Panc1 (cell line): ENCODE measurements at regions of chr3 and their contacts with region 1.

Region 1: GRCh38 chr3:160044121-160044520 is 55.5 kb downstream of the IL12A start:
- DNase-seq: no peak
- ATAC-seq: no peak
- H3K4me3 ChIP-seq: no peak overlapping the region
- H3K27ac ChIP-seq: no peak overlapping the region
- H3K4me1 ChIP-seq: no peaks in the 10 kb centered on the region
- H3K27me3 ChIP-seq: peaks cover 7% of the 10 kb centered on the region
- CTCF ChIP-seq: no peak

Region 2: DNA sequence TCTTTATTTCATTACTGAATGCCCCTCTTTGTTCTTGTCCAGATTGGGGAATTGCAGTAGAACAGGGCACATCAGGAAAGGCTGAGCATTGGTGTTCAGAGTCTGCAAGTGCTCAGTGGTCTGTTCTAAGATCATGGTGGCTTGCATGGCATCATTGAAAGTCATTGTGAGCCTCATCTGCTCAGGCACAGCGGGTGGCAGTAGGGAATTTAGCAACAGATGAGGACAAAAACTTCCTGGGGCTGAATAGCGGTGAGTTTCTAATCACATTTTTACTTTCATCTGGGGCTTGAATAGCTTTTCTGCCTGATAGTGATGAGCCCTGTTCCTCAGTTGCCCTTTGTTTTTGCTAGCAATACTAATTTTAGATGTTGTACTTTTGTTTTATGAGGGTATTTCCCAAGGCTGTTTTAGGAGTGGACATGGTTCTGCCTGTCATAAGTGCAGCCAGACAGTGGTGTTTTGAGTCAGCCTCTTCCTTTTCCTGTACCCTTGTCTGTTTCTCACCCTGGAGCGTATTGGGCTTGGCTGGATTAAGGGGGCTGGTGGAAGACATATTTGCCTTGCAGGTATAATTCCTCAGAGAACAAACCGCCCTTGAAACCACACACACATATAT is 182.6 kb before region 1 on chr3:
- CTCF ChIA-PET with region 1: no interaction called
- POLR2A ChIA-PET with region 1: no interaction called
- in situ Hi-C with region 1: no loop called
- intact Hi-C with region 1: no loop called
- DNase-seq: no peak
- ATAC-seq: no peak
- H3K4me3 ChIP-seq: no peak overlapping the region
- H3K27ac ChIP-seq: no peak overlapping the region
- H3K4me1 ChIP-seq: peaks cover 10% of the 10 kb centered on the region
- H3K27me3 ChIP-seq: no peaks in the 10 kb centered on the region
- CTCF ChIP-seq: no peak

Region 3: GRCh38 chr3:160090653-160091052 is 46.5 kb after region 1 on chr3:
- CTCF ChIA-PET with region 1: interaction called, 18 read pairs
- POLR2A ChIA-PET with region 1: no interaction called
- in situ Hi-C with region 1: no loop called
- intact Hi-C with region 1: no loop called
- DNase-seq: no peak
- ATAC-seq: no peak
- H3K4me3 ChIP-seq: no peak overlapping the region
- H3K27ac ChIP-seq: no peak overlapping the region
- H3K4me1 ChIP-seq: no peaks in the 10 kb centered on the region
- H3K27me3 ChIP-seq: no peaks in the 10 kb centered on the region
- CTCF ChIP-seq: no peak